ENCODE measurements at regions of chr9 and their contacts with region 1.

Region 1: DNA sequence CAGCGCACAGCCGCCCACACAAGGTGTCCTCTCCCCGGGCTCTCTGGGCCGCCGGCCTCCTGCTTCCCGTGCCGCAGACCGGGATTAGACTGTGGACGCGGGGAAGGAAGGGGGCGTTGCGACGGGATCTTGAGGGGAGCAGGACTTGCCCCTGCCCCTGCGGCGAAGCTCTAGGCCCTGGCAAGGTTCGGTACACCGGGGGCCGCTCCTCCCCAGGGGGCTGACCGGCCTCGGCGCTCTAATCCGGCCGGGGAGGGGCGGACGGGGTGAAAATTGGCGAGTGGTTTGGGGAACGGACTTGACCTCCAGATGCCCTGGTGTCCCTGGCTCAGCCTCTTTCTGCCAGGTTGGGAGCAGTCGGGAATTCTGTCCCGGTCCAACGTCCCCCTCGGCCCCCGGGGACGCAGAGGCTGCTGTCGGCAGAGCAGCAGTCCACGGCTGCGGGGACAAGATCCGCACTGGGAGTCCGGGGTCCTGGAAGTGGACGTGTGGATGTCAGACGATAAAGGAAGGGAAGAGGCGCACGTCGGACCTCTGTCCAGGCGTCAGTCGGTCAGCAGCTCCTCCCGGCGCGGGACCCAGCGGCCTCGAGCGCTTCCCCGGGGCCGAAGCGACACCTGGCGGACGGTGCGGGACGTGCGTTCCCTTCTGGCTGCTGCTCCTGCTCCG is 1.9 kb upstream of the CNTFR start:
- DNase-seq: peak; percentile 95
- H3K4me3 ChIP-seq: peak overlapping the region in 1 of 2 experiments; percentile 46; a peak in 1 of 4 replicates
- H3K27ac ChIP-seq: no peak overlapping the region
- H3K4me1 ChIP-seq: peaks cover 0 to 29% of the 10 kb centered on the region in 2 experiments; a peak in 1 of 4 replicates
- H3K27me3 ChIP-seq: peaks cover 43% of the 10 kb centered on the region
- CTCF ChIP-seq: peak; percentile 75
- EP300 ChIP-seq: no peak
- RAD21 ChIP-seq: peak; percentile 95

Region 2: DNA sequence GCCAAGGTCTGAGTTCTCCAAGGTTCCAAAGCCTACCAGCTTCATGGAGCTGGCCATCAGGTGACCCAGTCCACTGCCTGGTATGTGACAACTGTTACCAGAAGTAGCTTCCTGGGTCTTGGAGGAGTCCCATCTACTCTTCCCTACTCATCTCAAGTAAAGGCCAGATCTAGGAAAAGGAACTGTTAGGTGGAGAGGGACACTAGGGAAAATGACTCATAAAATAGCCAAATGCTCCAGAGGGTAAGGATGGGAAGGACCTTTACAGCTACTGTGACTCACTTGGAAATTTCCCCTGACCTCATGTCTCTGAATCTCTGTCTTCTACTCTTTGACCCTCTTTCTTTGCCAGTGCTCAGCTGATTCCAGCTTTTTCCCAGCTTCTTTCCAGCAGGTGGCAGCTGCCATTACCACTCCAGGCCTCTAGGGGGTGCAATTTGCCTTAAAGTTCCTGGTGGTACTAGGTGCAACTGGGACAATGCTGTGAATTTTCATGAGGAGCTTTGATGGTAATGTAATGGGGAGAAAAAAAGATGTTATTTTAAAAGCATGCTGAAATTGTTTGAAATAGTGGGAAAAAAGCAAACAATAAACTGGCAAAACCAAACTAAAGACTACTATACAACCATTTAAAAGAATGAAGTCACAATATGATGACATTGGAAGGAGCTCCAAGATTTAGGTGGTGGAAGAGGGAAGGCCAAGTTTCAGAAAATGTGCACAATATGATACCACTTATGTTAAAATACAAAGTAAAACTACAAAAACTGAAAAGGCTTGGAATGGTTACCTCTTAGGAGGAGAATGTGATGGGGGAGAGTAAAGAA is 187.6 kb before region 1 on chr9:
- CTCF ChIA-PET with region 1: interaction called, 32 read pairs
- POLR2A ChIA-PET with region 1: no interaction called
- DNase-seq: peak; percentile 78
- H3K4me3 ChIP-seq: peak overlapping the region in 1 of 2 experiments; percentile 44; a peak in 1 of 4 replicates
- H3K27ac ChIP-seq: no peak overlapping the region
- H3K4me1 ChIP-seq: peaks cover 0 to 12% of the 10 kb centered on the region in 2 experiments; a peak in 1 of 4 replicates
- H3K27me3 ChIP-seq: no peaks in the 10 kb centered on the region
- CTCF ChIP-seq: peak; percentile 99
- EP300 ChIP-seq: no peak
- RAD21 ChIP-seq: peak; percentile 99

Region 3: GRCh38 chr9:34446468-34446891 is 144.9 kb before region 1 on chr9:
- CTCF ChIA-PET with region 1: interaction called, 10 read pairs
- POLR2A ChIA-PET with region 1: no interaction called
- DNase-seq: no peak
- H3K4me3 ChIP-seq: no peak overlapping the region
- H3K27ac ChIP-seq: no peak overlapping the region
- H3K4me1 ChIP-seq: peaks cover 9 to 15% of the 10 kb centered on the region in 2 experiments; a peak in 2 of 4 replicates
- H3K27me3 ChIP-seq: no peaks in the 10 kb centered on the region
- CTCF ChIP-seq: no peak
- EP300 ChIP-seq: no peak
- RAD21 ChIP-seq: no peak

Region 4: DNA sequence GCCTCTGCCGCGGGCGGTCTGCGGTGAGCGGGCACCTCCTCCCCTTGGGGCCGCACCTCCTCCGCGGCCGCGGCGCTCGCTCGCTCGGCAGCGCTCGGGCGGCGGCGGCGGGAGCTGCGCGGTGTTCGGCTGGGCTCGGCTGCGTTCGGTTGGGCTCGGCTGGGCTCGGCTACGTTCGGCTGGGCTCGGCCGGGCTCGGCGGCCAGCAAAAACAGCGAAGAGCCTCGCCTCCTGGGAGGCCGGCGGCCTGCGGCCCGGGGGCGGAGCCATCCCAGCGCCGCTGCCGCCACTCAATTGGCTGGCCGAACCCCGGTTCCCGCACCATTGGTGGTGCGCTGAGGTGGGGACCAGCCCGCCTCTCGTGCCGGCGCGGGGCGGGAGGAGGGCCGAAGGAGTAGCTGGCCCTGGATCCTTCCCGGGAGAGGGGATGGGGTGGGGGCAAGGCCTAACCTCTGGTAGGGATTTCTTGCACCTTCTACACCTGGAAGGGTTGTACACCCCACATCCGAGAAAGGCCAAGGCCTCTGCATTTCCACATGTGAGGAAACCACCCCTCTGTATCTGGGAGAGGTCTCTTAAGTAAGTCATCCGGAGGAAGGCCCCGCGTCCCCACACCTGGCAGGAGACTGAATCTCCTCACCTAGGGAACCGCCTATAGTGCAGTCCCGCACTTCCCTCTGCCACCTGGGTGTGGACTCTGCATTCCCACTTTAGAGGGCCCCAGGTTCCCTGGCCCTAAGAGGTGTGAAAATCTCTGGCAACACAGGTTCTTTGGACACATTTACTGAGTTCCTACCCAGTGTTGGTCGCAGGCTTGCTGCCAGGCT is 68.2 kb before region 1 on chr9 and contains the start of gene ENHO:
- CTCF ChIA-PET with region 1: interaction called, 19 read pairs
- POLR2A ChIA-PET with region 1: interaction called, 4 read pairs
- DNase-seq: peak; percentile 99
- H3K4me3 ChIP-seq: peak within 1 kb of the TSS; percentile 50 to 53
- H3K27ac ChIP-seq: peak within 1 kb of the TSS in 1 of 2 experiments; percentile 36; a peak in 1 of 4 replicates
- H3K4me1 ChIP-seq: peaks cover 0 to 15% of the 10 kb centered on the region in 2 experiments; a peak in 1 of 4 replicates
- H3K27me3 ChIP-seq: no peaks in the 10 kb centered on the region
- CTCF ChIP-seq: no peak
- EP300 ChIP-seq: no peak
- RAD21 ChIP-seq: no peak
- polyA plus RNA-seq, gene ENHO: 1.2 and 1.5 TPM in 2 replicates

Region 5: GRCh38 chr9:34570376-34570775 is 21.0 kb before region 1 on chr9:
- CTCF ChIA-PET with region 1: interaction called, 112 read pairs
- POLR2A ChIA-PET with region 1: interaction called, 3 read pairs
- DNase-seq: peak; percentile 78
- H3K4me3 ChIP-seq: no peak overlapping the region
- H3K27ac ChIP-seq: peak overlapping the region in 1 of 2 experiments; percentile 94; a peak in 2 of 4 replicates
- H3K4me1 ChIP-seq: peaks cover 0 to 98% of the 10 kb centered on the region in 2 experiments; a peak in 2 of 4 replicates
- H3K27me3 ChIP-seq: no peaks in the 10 kb centered on the region; the same call in 1 of the 2 replicates
- CTCF ChIP-seq: no peak
- EP300 ChIP-seq: no peak; a peak in 1 of 4 replicates
- RAD21 ChIP-seq: no peak

Region 6: GRCh38 chr9:34620061-34620994 is 28.9 kb after region 1 on chr9 and contains the start of gene DCTN3:
- CTCF ChIA-PET with region 1: interaction called, 12 read pairs
- POLR2A ChIA-PET with region 1: no interaction called
- DNase-seq: peak; percentile 97
- H3K4me3 ChIP-seq: peak within 1 kb of the TSS; percentile 94 to 96
- H3K27ac ChIP-seq: peak within 1 kb of the TSS in 1 of 2 experiments; percentile 13; a peak in 2 of 4 replicates
- H3K4me1 ChIP-seq: peaks cover 5 to 22% of the 10 kb centered on the region in 2 experiments; a peak in 2 of 4 replicates
- H3K27me3 ChIP-seq: no peaks in the 10 kb centered on the region
- CTCF ChIP-seq: no peak
- EP300 ChIP-seq: no peak
- RAD21 ChIP-seq: no peak
- polyA plus RNA-seq, gene DCTN3: 210 and 300 TPM in 2 replicates

Measured in SK-N-SH (cell line).